ENCODE measurements at regions of chr1 and their contacts with region 1.

Region 1: DNA sequence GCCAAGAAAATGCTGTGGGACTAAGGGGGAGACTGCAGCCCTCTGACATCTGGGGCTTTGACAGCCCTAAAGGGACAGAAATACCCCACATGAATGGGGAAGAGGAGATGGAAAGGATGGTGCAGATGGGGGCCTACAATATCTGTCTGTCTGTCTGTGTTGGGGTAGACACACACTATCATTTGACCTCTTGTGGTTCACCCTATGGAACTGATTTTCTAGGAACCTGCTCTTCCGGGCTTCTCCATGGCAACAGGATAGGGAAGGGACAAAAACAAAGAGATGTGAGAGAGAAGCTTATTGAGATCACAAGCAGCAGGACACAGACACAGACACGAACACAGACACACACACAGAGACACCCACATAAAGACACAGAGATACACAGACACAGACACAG is 17.1 kb downstream of the KIF21B start:
- DNase-seq: no peak
- H3K4me3 Mint-ChIP-seq: no peak overlapping the region
- H3K27ac Mint-ChIP-seq: no peak overlapping the region
- H3K4me1 Mint-ChIP-seq: peaks cover 41% of the 10 kb centered on the region
- H3K27me3 Mint-ChIP-seq: no peaks in the 10 kb centered on the region

Region 2: GRCh38 chr1:201023517-201023902 is 17.1 kb after region 1 on chr1 and contains the start of gene KIF21B:
- CTCF ChIA-PET with region 1: interaction called, 14 read pairs
- POLR2A ChIA-PET with region 1: interaction called, 178 read pairs
- DNase-seq: peak; percentile 94
- H3K4me3 Mint-ChIP-seq: peak within 1 kb of the TSS; percentile 96
- H3K27ac Mint-ChIP-seq: peak within 1 kb of the TSS; percentile 99
- H3K4me1 Mint-ChIP-seq: peaks cover 73% of the 10 kb centered on the region
- H3K27me3 Mint-ChIP-seq: no peaks in the 10 kb centered on the region
- total RNA-seq, gene KIF21B: 175 to 180 TPM

Measured in activated CD4-positive, alpha-beta memory T cell treated with anti-CD3 and anti-CD28 coated beads, Interleukin-2, amount 10 ng/mL, durations not matched to agents 7 days and 5 days (primary cell).